Activated naive CD4-positive, alpha-beta T cell treated with anti-CD3 and anti-CD28 coated beads for 36 hours (primary cell): ENCODE measurements at regions of chr5 and their contacts with region 1.

Region 1: GRCh38 chr5:35777358-35778087 is 79.2 kb upstream of the IL7R start:
- DNase-seq: peak; percentile 88
- H3K4me3 Mint-ChIP-seq: peak overlapping the region; percentile 46
- H3K27ac Mint-ChIP-seq: peak overlapping the region; percentile 85
- H3K4me1 Mint-ChIP-seq: peaks cover 74% of the 10 kb centered on the region
- H3K27me3 Mint-ChIP-seq: no peaks in the 10 kb centered on the region

Region 2: GRCh38 chr5:35319333-35320002 is 458.1 kb before region 1 on chr5:
- CTCF ChIA-PET with region 1: no interaction called
- intact Hi-C with region 1: loop called (anchors 10 kb)
- DNase-seq: peak; percentile 94
- H3K4me3 Mint-ChIP-seq: no peak overlapping the region
- H3K27ac Mint-ChIP-seq: peak overlapping the region; percentile 24
- H3K4me1 Mint-ChIP-seq: peaks cover 14% of the 10 kb centered on the region
- H3K27me3 Mint-ChIP-seq: peaks cover 24% of the 10 kb centered on the region

Region 3: GRCh38 chr5:35626108-35626507 is 151.4 kb before region 1 on chr5:
- CTCF ChIA-PET with region 1: no interaction called
- intact Hi-C with region 1: no loop called
- DNase-seq: no peak
- H3K4me3 Mint-ChIP-seq: no peak overlapping the region
- H3K27ac Mint-ChIP-seq: no peak overlapping the region
- H3K4me1 Mint-ChIP-seq: peaks cover 26% of the 10 kb centered on the region
- H3K27me3 Mint-ChIP-seq: no peaks in the 10 kb centered on the region

Region 4: GRCh38 chr5:35651002-35651756 is 126.3 kb before region 1 on chr5:
- CTCF ChIA-PET with region 1: interaction called, 36 read pairs
- intact Hi-C with region 1: loop called (anchors 1 kb)
- DNase-seq: peak; percentile 83
- H3K4me3 Mint-ChIP-seq: no peak overlapping the region
- H3K27ac Mint-ChIP-seq: no peak overlapping the region
- H3K4me1 Mint-ChIP-seq: peaks cover 9% of the 10 kb centered on the region
- H3K27me3 Mint-ChIP-seq: no peaks in the 10 kb centered on the region

Region 5: DNA sequence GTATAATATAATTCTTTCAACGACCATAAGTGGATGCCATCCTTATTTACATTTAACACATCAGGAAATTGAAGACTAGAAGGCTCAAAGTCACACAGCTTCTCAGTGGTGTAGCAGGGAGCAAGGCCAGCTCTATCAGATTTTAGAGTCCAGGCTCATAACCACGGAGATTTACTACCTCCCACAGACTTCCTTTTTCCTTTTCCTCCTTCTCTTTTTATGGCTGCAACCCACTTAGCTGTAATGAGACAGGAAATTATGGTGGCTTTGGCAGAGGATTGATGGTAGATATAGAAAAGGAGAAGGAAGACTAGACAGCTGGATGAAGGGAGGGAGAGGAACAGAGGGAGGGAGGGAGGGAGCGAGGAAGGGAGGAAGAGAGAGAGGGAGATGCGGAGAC is 112.4 kb before region 1 on chr5:
- CTCF ChIA-PET with region 1: interaction called, 6 read pairs
- intact Hi-C with region 1: loop called (anchors 1 kb)
- DNase-seq: no peak
- H3K4me3 Mint-ChIP-seq: no peak overlapping the region
- H3K27ac Mint-ChIP-seq: no peak overlapping the region
- H3K4me1 Mint-ChIP-seq: peaks cover 45% of the 10 kb centered on the region
- H3K27me3 Mint-ChIP-seq: no peaks in the 10 kb centered on the region

Region 6: DNA sequence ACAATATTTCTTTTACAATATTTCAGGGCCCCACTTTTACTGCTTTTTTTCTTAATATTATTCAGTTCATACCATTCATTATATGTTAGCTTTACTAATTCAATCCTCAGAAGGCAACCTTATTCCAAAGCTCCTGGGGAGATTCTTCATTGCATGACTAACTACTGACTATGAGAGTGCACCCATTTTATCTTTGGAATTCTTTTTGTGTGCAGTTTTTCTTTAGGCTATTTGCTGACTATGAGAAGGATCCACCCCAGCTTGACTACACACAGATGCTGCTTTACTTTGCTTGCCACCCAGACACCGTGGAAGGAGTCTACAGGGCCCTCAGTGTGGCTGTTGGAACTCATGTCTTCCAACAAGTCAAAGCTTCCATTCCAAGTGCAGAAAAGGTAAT is 22.2 kb after region 1 on chr5:
- CTCF ChIA-PET with region 1: interaction called, 35 read pairs
- intact Hi-C with region 1: no loop called
- DNase-seq: no peak
- H3K4me3 Mint-ChIP-seq: no peak overlapping the region
- H3K27ac Mint-ChIP-seq: no peak overlapping the region
- H3K4me1 Mint-ChIP-seq: peaks cover 76% of the 10 kb centered on the region
- H3K27me3 Mint-ChIP-seq: no peaks in the 10 kb centered on the region

Region 7: DNA sequence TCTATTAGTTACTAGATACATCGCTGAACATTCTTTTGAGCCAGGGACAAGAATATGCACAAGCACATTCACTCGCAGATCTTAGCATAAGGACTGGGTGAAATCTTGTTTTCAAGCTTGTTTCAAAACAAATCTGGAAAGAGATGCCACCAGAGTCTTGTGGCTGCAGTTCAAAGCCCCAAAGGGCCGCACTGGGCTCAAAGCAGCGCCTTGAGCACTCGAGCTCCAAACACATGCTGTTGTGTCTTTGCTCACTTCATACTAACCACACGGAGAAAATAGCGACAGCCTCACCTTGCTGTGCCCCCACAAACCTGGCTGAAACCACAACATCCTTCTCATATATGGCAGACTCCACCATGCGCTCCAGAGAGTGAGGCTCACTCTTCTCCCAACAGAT is 45.0 kb after region 1 on chr5:
- CTCF ChIA-PET with region 1: interaction called, 56 read pairs
- intact Hi-C with region 1: no loop called
- DNase-seq: peak; percentile 56
- H3K4me3 Mint-ChIP-seq: peak overlapping the region; percentile 30
- H3K27ac Mint-ChIP-seq: peak overlapping the region; percentile 95
- H3K4me1 Mint-ChIP-seq: peaks cover 87% of the 10 kb centered on the region
- H3K27me3 Mint-ChIP-seq: no peaks in the 10 kb centered on the region

Region 8: GRCh38 chr5:35963381-35963843 is 185.9 kb after region 1 on chr5:
- CTCF ChIA-PET with region 1: no interaction called
- intact Hi-C with region 1: no loop called
- DNase-seq: peak; percentile 35
- H3K4me3 Mint-ChIP-seq: no peak overlapping the region
- H3K27ac Mint-ChIP-seq: no peak overlapping the region
- H3K4me1 Mint-ChIP-seq: no peaks in the 10 kb centered on the region
- H3K27me3 Mint-ChIP-seq: peaks cover 15% of the 10 kb centered on the region

Region 9: GRCh38 chr5:37308796-37309195 is 1531.3 kb after region 1 on chr5:
- CTCF ChIA-PET with region 1: no interaction called
- intact Hi-C with region 1: no loop called
- DNase-seq: no peak
- H3K4me3 Mint-ChIP-seq: no peak overlapping the region
- H3K27ac Mint-ChIP-seq: no peak overlapping the region
- H3K4me1 Mint-ChIP-seq: no peaks in the 10 kb centered on the region
- H3K27me3 Mint-ChIP-seq: no peaks in the 10 kb centered on the region